ENCODE measurements at regions of chr12 and their contacts with region 1.

Region 1: DNA sequence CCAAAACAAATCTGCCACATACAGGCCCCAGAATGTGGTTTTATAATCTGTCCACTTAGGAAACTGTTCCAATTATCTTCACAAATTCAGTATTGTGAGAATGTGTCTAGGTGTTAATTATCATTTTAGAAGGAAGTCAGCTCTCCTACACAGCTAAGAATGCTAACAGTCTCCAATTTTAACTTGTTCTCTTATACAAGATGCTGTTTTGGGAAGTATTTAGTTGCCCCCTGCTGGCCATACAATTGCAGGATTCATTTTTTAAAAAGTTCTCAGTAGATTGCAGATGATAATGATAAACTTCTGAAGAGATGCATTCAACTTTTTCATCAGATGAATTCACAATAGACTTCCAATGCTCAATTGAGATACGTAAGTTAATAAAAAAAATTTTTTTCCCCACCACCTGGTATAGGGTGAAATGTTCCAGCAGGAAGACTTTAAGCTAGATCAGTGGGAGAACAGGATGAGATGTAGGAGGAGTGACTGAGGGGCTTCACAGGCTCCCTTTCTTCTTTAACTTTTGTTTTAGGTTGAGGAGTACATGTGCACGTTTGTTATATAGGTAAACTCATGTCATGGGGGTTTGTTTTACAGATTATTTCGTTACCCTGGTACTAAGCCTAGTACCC is 27.3 kb upstream of the OSBPL8 start:
- DNase-seq: peak; percentile 17 to 70 (median 20)
- ATAC-seq: peak; percentile 86
- H3K4me3 ChIP-seq: no peak overlapping the region
- H3K27ac ChIP-seq: no peak overlapping the region
- H3K4me1 ChIP-seq: no peaks in the 10 kb centered on the region; a peak in 1 of 5 replicates
- H3K27me3 ChIP-seq: no peaks in the 10 kb centered on the region
- CTCF ChIP-seq: peak; percentile 47 to 83 (median 58); a peak in 4 of 6 replicates
- EP300 ChIP-seq: no peak
- POLR2A ChIP-seq: no peak
- RAD21 ChIP-seq: peak; percentile 85 to 88

Region 2: GRCh38 chr12:76037130-76038103 is 549.5 kb before region 1 on chr12:
- CTCF ChIA-PET with region 1: no interaction called
- POLR2A ChIA-PET with region 1: no interaction called
- in situ Hi-C with region 1: no loop called
- intact Hi-C with region 1: loop called (anchors 5 kb)
- DNase-seq: peak; percentile 58 to 80 (median 62)
- ATAC-seq: peak; percentile 77
- H3K4me3 ChIP-seq: no peak overlapping the region
- H3K27ac ChIP-seq: no peak overlapping the region
- H3K4me1 ChIP-seq: peaks cover 12 to 35% of the 10 kb centered on the region in 2 experiments; a peak in 4 of 5 replicates
- H3K27me3 ChIP-seq: no peaks in the 10 kb centered on the region
- CTCF ChIP-seq: peak; percentile 70 to 91 (median 82)
- EP300 ChIP-seq: no peak
- POLR2A ChIP-seq: no peak
- RAD21 ChIP-seq: peak; percentile 94 to 96

Region 3: GRCh38 chr12:76455582-76456345 is 131.1 kb before region 1 on chr12:
- CTCF ChIA-PET with region 1: no interaction called
- POLR2A ChIA-PET with region 1: no interaction called
- in situ Hi-C with region 1: no loop called
- intact Hi-C with region 1: loop called (anchors 2 kb)
- DNase-seq: peak; percentile 14 to 66 (median 18)
- ATAC-seq: peak; percentile 94
- H3K4me3 ChIP-seq: no peak overlapping the region
- H3K27ac ChIP-seq: no peak overlapping the region
- H3K4me1 ChIP-seq: no peaks in the 10 kb centered on the region
- H3K27me3 ChIP-seq: no peaks in the 10 kb centered on the region
- CTCF ChIP-seq: peak; percentile 34 to 72 (median 51); a peak in 5 of 6 replicates
- EP300 ChIP-seq: no peak
- POLR2A ChIP-seq: 0 out of 2 replicates have a peak, but pooled peaks have one; percentile 27
- RAD21 ChIP-seq: peak; percentile 71 to 88

Region 4: GRCh38 chr12:76470028-76470939 is 116.6 kb before region 1 on chr12:
- CTCF ChIA-PET with region 1: no interaction called
- POLR2A ChIA-PET with region 1: no interaction called
- in situ Hi-C with region 1: no loop called
- intact Hi-C with region 1: loop called (anchors 5 kb)
- DNase-seq: peak; percentile 28 to 71 (median 48)
- ATAC-seq: peak; percentile 95
- H3K4me3 ChIP-seq: no peak overlapping the region
- H3K27ac ChIP-seq: no peak overlapping the region
- H3K4me1 ChIP-seq: peaks cover 0 to 16% of the 10 kb centered on the region in 2 experiments; a peak in 2 of 5 replicates
- H3K27me3 ChIP-seq: no peaks in the 10 kb centered on the region
- CTCF ChIP-seq: no peak
- EP300 ChIP-seq: peak; percentile 39; the same call in 1 of the 2 replicates
- POLR2A ChIP-seq: no peak
- RAD21 ChIP-seq: no peak

Measured in K562 (cell line).